ENCODE measurements at regions of chr19 and their contacts with region 1.

Region 1: GRCh38 chr19:35347171-35347929 is at the start of gene FFAR1:
- DNase-seq: peak; percentile 93
- ATAC-seq: peak; percentile 62
- H3K4me3 ChIP-seq: peak within 1 kb of the TSS in 3 of 5 experiments; percentile 12 to 18 (median 17)
- H3K4me3 Mint-ChIP-seq: peak within 1 kb of the TSS; percentile 82
- H3K27ac ChIP-seq: peak within 1 kb of the TSS; percentile 91 to 92
- H3K27ac Mint-ChIP-seq: peak within 1 kb of the TSS; percentile 96
- H3K4me1 ChIP-seq: peaks cover 72 to 87% of the 10 kb centered on the region in 2 donors
- H3K4me1 Mint-ChIP-seq: peaks cover 75% of the 10 kb centered on the region
- H3K27me3 ChIP-seq: no peaks in the 10 kb centered on the region
- H3K27me3 Mint-ChIP-seq: no peaks in the 10 kb centered on the region
- CTCF ChIP-seq: no peak
- total RNA-seq, gene FFAR1: 3.0 and 3.3 TPM in 2 replicates

Region 2: DNA sequence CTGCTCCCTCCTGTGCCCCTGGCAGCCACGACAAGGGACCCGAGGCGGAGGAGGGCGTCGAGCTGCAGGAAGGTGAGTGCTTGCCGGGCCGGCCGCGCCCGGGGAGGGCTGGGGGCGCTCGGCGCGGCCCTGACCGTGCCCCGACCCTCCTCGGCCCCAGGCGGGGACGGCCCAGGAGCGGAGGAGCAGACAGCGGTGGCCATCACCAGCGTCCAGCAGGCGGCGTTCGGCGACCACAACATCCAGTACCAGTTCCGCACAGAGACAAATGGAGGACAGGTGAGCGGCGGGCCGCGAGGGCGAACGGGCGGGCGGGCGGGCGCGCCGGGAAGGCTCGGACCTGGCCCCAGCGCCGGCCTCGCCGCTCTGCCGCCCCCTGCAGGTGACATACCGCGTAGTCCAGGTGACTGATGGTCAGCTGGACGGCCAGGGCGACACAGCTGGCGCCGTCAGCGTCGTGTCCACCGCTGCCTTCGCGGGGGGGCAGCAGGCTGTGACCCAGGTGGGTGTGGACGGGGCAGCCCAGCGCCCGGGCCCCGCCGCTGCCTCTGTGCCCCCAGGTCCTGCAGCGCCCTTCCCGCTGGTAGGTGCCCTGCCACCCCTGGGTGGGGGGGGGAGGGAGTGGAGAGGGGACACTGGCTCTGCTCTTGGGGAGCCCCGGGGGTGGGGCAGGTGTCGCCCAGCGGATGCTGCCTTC is 77.8 kb before region 1 on chr19:
- CTCF ChIA-PET with region 1: interaction called, 11 read pairs
- POLR2A ChIA-PET with region 1: interaction called, 4 read pairs
- intact Hi-C with region 1: loop called (anchors 1 kb)
- DNase-seq: peak; percentile 92
- ATAC-seq: peak; percentile 71
- H3K4me3 ChIP-seq: peak overlapping the region in 4 of 5 experiments; percentile 24 to 62 (median 54)
- H3K4me3 Mint-ChIP-seq: peak overlapping the region; percentile 84
- H3K27ac ChIP-seq: no peak overlapping the region
- H3K27ac Mint-ChIP-seq: peak overlapping the region; percentile 87
- H3K4me1 ChIP-seq: peaks cover 39 to 57% of the 10 kb centered on the region in 2 donors
- H3K4me1 Mint-ChIP-seq: peaks cover 62% of the 10 kb centered on the region
- H3K27me3 ChIP-seq: no peaks in the 10 kb centered on the region
- H3K27me3 Mint-ChIP-seq: no peaks in the 10 kb centered on the region
- CTCF ChIP-seq: peak; percentile 77

Region 3: DNA sequence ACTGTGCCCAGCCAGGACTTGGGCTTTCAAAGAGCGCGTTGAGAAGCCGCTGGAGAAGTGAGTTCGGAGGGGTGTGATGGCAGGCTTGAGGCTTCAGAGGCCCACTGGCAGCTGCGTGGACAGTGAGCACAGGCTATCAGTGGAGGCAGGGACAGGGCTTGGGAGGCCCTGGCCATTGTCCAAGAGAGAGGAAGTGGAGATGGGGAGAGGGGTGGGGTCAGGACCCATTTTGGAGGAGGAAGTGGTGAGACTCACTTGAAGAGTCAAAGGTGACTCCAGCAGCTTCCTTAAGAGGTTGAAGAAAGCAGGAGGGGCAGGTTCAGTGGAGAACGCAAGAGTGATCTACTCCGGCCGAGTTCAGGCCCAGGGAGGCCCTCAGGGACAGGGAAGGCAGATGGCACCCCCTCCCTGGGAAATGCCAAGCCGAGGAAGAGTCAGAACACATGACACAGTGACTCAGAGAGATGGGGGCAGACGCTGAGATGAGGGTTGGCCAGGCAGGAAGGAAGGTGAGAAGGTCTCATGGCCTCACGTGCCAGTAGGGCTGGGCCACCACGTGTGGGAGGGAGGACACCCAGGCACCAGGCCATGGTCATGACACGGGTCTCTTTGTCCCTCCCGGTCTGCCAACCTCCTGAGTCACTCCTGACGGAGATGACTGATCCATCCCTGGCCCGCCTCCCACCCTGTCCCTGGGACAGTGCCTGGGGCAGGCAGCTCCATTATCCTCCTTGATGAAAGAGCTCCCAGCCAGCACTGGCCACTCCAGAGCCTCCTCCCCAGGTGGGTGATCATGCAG is 28.5 kb before region 1 on chr19:
- CTCF ChIA-PET with region 1: interaction called, 8 read pairs
- POLR2A ChIA-PET with region 1: interaction called, 8 read pairs
- intact Hi-C with region 1: loop called (anchors 1 kb)
- DNase-seq: peak; percentile 65
- ATAC-seq: peak; percentile 25
- H3K4me3 ChIP-seq: peak overlapping the region in 1 of 5 experiments; percentile 53
- H3K4me3 Mint-ChIP-seq: peak overlapping the region; percentile 75
- H3K27ac ChIP-seq: peak overlapping the region; percentile 94 to 97
- H3K27ac Mint-ChIP-seq: peak overlapping the region; percentile 91
- H3K4me1 ChIP-seq: peaks cover 81 to 97% of the 10 kb centered on the region in 2 donors
- H3K4me1 Mint-ChIP-seq: peaks cover 85% of the 10 kb centered on the region
- H3K27me3 ChIP-seq: no peaks in the 10 kb centered on the region
- H3K27me3 Mint-ChIP-seq: no peaks in the 10 kb centered on the region
- CTCF ChIP-seq: no peak

Region 4: DNA sequence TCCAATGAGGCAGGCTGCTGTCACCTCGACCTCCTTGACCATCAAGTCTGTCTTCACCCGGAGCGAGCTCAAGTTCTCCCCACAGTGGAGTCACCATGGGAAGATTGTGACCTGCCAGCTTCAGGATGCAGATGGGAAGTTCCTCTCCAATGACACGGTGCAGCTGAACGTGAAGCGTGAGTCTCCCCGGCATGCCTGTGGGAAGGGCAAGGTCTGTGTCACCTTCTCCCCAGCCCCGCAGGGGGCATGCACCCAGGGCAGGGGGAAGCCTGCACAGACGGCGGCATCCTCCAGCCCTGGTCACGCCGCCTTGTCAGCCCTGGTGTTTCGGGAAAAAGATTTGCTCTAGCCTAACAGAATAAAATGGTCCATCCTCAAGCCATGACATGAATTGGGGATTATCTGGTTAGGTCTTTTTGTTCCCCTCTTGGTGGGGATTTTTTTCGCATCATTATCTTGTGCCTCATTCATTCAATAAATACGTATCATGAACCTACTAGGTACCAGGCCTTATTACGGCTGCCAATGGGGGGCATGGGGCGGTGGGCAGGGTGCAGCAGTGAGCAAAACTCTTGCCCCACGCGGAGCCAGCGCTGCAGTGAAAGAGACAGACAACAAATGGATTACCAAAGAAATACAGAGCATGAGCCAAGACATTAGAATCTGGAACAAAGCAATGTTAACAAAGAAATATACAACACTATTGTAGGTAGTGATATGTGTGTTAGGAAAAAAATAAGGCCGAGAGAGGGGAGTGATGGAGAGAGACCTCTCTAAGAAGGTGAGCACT is 11.0 kb before region 1 on chr19:
- CTCF ChIA-PET with region 1: interaction called, 24 read pairs
- POLR2A ChIA-PET with region 1: interaction called, 12 read pairs
- intact Hi-C with region 1: no loop called
- DNase-seq: no peak
- ATAC-seq: no peak
- H3K4me3 ChIP-seq: no peak overlapping the region
- H3K4me3 Mint-ChIP-seq: peak overlapping the region; percentile 47
- H3K27ac ChIP-seq: peak overlapping the region in 1 of 2 donors; percentile 59
- H3K27ac Mint-ChIP-seq: peak overlapping the region; percentile 88
- H3K4me1 ChIP-seq: peaks cover 70 to 94% of the 10 kb centered on the region in 2 donors
- H3K4me1 Mint-ChIP-seq: peaks cover 81% of the 10 kb centered on the region
- H3K27me3 ChIP-seq: no peaks in the 10 kb centered on the region
- H3K27me3 Mint-ChIP-seq: no peaks in the 10 kb centered on the region
- CTCF ChIP-seq: no peak

Region 5: GRCh38 chr19:35495107-35496064 is 148.0 kb after region 1 on chr19:
- CTCF ChIA-PET with region 1: interaction called, 76 read pairs
- POLR2A ChIA-PET with region 1: interaction called, 3 read pairs
- intact Hi-C with region 1: loop called (anchors 1 kb)
- DNase-seq: peak; percentile 82
- ATAC-seq: peak; percentile 99
- H3K4me3 ChIP-seq: peak overlapping the region in 1 of 5 experiments; percentile 24
- H3K4me3 Mint-ChIP-seq: no peak overlapping the region
- H3K27ac ChIP-seq: no peak overlapping the region
- H3K27ac Mint-ChIP-seq: no peak overlapping the region
- H3K4me1 ChIP-seq: peaks cover 6 to 11% of the 10 kb centered on the region in 2 donors
- H3K4me1 Mint-ChIP-seq: peaks cover 8% of the 10 kb centered on the region
- H3K27me3 ChIP-seq: peaks cover 0 to 6% (median 2%) of the 10 kb centered on the region in 4 experiments
- H3K27me3 Mint-ChIP-seq: peaks cover 9% of the 10 kb centered on the region
- CTCF ChIP-seq: peak; percentile 100

Region 6: GRCh38 chr19:35612559-35613321 is 265.4 kb after region 1 on chr19 and contains the start of gene HAUS5:
- CTCF ChIA-PET with region 1: no interaction called
- POLR2A ChIA-PET with region 1: no interaction called
- intact Hi-C with region 1: no loop called
- DNase-seq: peak; percentile 97
- ATAC-seq: peak; percentile 79
- H3K4me3 ChIP-seq: peak within 1 kb of the TSS; percentile 37 to 87 (median 78)
- H3K4me3 Mint-ChIP-seq: peak within 1 kb of the TSS; percentile 92
- H3K27ac ChIP-seq: peak within 1 kb of the TSS; percentile 76 to 77
- H3K27ac Mint-ChIP-seq: peak within 1 kb of the TSS; percentile 98
- H3K4me1 ChIP-seq: peaks cover 38 to 53% of the 10 kb centered on the region in 2 donors
- H3K4me1 Mint-ChIP-seq: peaks cover 42% of the 10 kb centered on the region
- H3K27me3 ChIP-seq: no peaks in the 10 kb centered on the region
- H3K27me3 Mint-ChIP-seq: no peaks in the 10 kb centered on the region
- CTCF ChIP-seq: no peak
- total RNA-seq, gene HAUS5: 32.2 and 35.3 TPM in 2 replicates